Stomach (tissue), 19 donors: ENCODE measurements at regions of chr1 and their contacts with region 1.

Region 1: GRCh38 chr1:113904674-113905434 is at the starts of genes AP4B1 and DCLRE1B:
- DNase-seq: peak; percentile 98 to 100
- H3K4me3 ChIP-seq: peak within 1 kb of the TSS; percentile 73 to 90 (median 86)
- H3K27ac ChIP-seq: peak within 1 kb of the TSS; percentile 87 to 97 (median 93)
- H3K4me1 ChIP-seq: peaks cover 8 to 50% (median 35%) of the 10 kb centered on the region in 4 donors
- H3K27me3 ChIP-seq: no peaks in the 10 kb centered on the region
- CTCF ChIP-seq: peak in 5 of 7 experiments; percentile 50 to 96 (median 83)
- EP300 ChIP-seq: no peak
- POLR2A ChIP-seq: peak in 1 of 4 donors; percentile 55
- total RNA-seq, gene AP4B1: 4.0 to 34.0 (median 11.7) TPM
- total RNA-seq, gene DCLRE1B: 0.45 to 3.9 (median 3.0) TPM in 3 of 5 donors, not detected in the others

Region 2: DNA sequence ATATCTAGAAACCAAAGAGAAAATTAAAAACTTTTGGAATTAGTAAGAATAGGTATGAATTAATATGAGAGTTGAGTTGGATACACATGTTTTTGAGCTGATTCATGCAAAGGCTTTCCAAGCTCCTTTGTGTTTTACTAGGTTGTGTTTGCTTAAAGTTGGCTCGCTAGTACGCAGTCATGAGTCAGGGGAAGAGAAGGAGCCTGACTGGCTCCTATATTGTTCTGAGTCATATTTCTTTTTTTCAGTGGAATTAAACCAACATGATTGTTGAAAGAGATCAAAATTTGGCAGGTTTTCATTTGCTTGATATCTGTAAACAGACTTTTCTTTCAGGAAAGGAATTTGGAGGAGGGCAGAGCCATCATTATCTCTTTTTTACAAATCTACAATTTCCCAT is 447.9 kb before region 1 on chr1:
- intact Hi-C with region 1: no loop called
- DNase-seq: peak; percentile 40 to 82
- H3K4me3 ChIP-seq: no peak overlapping the region
- H3K27ac ChIP-seq: peak overlapping the region in 3 of 5 donors; percentile 51 to 72 (median 62)
- H3K4me1 ChIP-seq: peaks cover 6 to 44% (median 25%) of the 10 kb centered on the region in 4 donors
- H3K27me3 ChIP-seq: no peaks in the 10 kb centered on the region
- CTCF ChIP-seq: no peak
- EP300 ChIP-seq: no peak
- POLR2A ChIP-seq: no peak

Region 3: DNA sequence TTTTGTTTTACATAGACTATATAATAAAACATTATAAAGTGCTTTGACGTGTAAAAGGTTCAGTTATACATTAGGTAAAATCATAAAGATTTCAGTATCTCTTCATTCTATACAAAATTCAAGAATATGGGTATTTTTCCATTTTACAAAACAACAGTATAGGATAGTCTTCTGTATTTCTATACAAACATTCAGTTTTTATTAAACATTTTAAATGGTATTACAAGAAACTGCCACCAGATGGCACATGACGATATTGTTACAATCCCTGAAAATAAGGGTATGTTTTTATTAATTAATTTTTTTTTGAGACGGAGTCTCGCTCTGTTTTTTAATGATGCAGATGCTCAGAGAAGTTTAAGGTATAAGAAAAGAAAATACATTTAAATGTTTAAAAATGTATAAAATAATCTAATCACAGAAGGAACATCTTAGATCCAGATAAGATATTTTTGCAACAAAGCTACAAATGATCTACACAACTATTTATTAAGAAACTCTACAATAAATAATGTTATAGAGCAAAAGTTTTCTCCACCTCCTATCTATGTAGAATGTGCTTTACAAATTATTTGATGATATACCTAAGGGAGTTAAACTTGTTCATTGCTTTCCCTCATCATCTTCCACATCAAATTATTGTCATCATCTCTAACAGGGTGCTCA is 69.1 kb before region 1 on chr1:
- intact Hi-C with region 1: loop called (anchors 10 kb)
- DNase-seq: peak in 1 of 2 donors; percentile 79
- H3K4me3 ChIP-seq: no peak overlapping the region
- H3K27ac ChIP-seq: no peak overlapping the region
- H3K4me1 ChIP-seq: peaks cover 0 to 7% (median 3%) of the 10 kb centered on the region in 4 donors
- H3K27me3 ChIP-seq: no peaks in the 10 kb centered on the region
- CTCF ChIP-seq: peak in 5 of 7 experiments; percentile 32 to 69 (median 57)
- EP300 ChIP-seq: no peak
- POLR2A ChIP-seq: no peak